ENCODE measurements at regions of chr10 and their contacts with region 1.

Region 1: GRCh38 chr10:6580279-6581029 is 378 bp upstream of the PRKCQ start:
- DNase-seq: peak; percentile 81
- H3K4me3 Mint-ChIP-seq: peak overlapping the region; percentile 95
- H3K27ac Mint-ChIP-seq: peak overlapping the region; percentile 89
- H3K4me1 Mint-ChIP-seq: peaks cover 68% of the 10 kb centered on the region
- H3K27me3 Mint-ChIP-seq: no peaks in the 10 kb centered on the region

Region 2: DNA sequence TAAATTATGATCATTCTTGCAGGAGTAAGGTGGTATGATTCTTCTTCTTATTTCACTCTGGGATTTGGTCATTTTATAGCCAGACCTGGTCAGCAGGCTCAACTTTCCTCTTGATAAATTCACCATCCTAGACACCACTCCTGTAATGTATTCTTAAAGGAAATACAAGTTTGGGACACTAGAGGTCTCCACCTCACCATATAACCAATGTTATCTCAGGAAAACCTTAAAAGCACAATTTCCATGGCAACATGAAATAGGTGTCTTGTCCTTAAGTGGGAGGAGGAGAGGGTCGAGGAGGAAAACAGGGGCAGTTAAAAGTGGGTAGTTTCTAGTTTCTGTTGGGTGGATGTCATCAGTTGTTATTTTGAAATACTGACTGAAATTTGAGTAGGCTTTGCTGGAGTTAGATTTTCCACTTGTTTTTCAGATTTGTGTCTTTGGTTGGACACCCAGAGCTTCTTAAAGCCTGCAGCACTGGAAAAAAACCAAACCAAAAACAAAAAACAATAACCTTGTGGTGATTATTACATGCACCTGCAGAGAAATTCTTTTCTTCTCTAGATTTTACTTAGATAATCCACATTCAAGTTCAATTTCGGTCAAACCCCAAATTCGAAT is 163.5 kb before region 1 on chr10:
- intact Hi-C with region 1: loop called (anchors 2 kb)
- DNase-seq: no peak
- H3K4me3 Mint-ChIP-seq: no peak overlapping the region
- H3K27ac Mint-ChIP-seq: no peak overlapping the region
- H3K4me1 Mint-ChIP-seq: peaks cover 5% of the 10 kb centered on the region
- H3K27me3 Mint-ChIP-seq: no peaks in the 10 kb centered on the region

Region 3: GRCh38 chr10:6498771-6499170 is 81.7 kb before region 1 on chr10:
- intact Hi-C with region 1: loop called (anchors 1 kb)
- DNase-seq: peak; percentile 48
- H3K4me3 Mint-ChIP-seq: peak overlapping the region; percentile 65
- H3K27ac Mint-ChIP-seq: peak overlapping the region; percentile 87
- H3K4me1 Mint-ChIP-seq: peaks cover 27% of the 10 kb centered on the region
- H3K27me3 Mint-ChIP-seq: no peaks in the 10 kb centered on the region

Region 4: GRCh38 chr10:6563075-6563474 is 17.4 kb before region 1 on chr10:
- intact Hi-C with region 1: loop called (anchors 1 kb)
- DNase-seq: peak; percentile 44
- H3K4me3 Mint-ChIP-seq: peak overlapping the region; percentile 66
- H3K27ac Mint-ChIP-seq: peak overlapping the region; percentile 80
- H3K4me1 Mint-ChIP-seq: peaks cover 72% of the 10 kb centered on the region
- H3K27me3 Mint-ChIP-seq: no peaks in the 10 kb centered on the region

Region 5: DNA sequence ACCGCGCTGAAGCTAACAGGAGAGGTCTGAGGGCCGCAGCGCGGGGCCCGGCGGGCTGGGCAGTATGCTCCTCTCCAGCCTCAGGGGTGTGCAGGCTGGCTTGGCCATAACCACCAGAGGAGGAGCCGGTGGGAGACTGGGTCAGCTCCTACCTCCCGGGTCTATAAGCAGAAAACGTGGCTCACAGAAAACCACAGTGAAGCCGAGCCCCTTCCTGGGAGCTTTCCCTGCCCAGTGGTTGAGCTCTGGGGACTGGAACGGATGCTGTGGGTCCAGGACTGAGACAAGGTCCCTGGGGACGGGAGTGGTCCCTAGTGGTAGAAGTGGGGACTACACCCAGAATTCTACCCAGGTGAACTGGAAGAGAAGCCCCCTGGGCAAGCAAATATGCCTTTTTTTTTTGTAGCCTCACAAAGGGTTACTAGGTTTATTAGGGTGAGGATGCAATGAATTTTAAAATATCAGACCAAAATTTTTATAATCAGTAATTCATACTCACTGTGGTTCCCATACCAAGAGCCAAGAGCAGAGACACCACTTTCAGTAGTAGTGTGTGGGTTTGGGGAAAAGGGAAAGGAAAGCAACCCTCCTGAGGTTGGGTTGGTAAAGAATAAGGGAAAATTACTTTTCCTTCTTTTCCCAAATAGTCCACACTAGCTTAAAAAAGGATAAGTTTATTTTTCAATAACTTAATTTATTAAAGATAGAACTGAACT is 67.5 kb after region 1 on chr10:
- intact Hi-C with region 1: loop called (anchors 1 kb)
- DNase-seq: peak; percentile 53
- H3K4me3 Mint-ChIP-seq: no peak overlapping the region
- H3K27ac Mint-ChIP-seq: no peak overlapping the region
- H3K4me1 Mint-ChIP-seq: peaks cover 47% of the 10 kb centered on the region
- H3K27me3 Mint-ChIP-seq: no peaks in the 10 kb centered on the region

Measured in activated T-helper 2 cell treated with anti-CD3 and anti-CD28 coated beads, Interferon-gamma antibody, Interleukin-2, Interleukin-4, amounts not matched to agents 10 μg/mL and 5 μg/mL and 100 μg/mL, durations not matched to agents 14 hours and 24 hours and 36 hours (primary cell).